ENCODE measurements at regions of chr12 and their contacts with region 1.

Region 1: GRCh38 chr12:67501362-67501761 is 147.2 kb upstream of the DYRK2 start:
- DNase-seq: no peak
- ATAC-seq: peak; percentile 85 to 91
- H3K4me3 ChIP-seq: no peak overlapping the region
- H3K27ac ChIP-seq: peak overlapping the region; percentile 37 to 86 (median 74)
- H3K4me1 ChIP-seq: peaks cover 9 to 15% of the 10 kb centered on the region in 2 donors
- H3K27me3 ChIP-seq: no peaks in the 10 kb centered on the region
- CTCF ChIP-seq: no peak
- POLR2A ChIP-seq: no peak

Region 2: GRCh38 chr12:67477681-67478265 is 23.6 kb before region 1 on chr12:
- in situ Hi-C with region 1: no loop called
- intact Hi-C with region 1: loop called (anchors 2 kb)
- DNase-seq: no peak
- ATAC-seq: no peak
- H3K4me3 ChIP-seq: no peak overlapping the region
- H3K27ac ChIP-seq: no peak overlapping the region
- H3K4me1 ChIP-seq: peaks cover 5 to 6% of the 10 kb centered on the region in 2 donors
- H3K27me3 ChIP-seq: no peaks in the 10 kb centered on the region
- CTCF ChIP-seq: no peak
- POLR2A ChIP-seq: no peak

Measured in gastrocnemius medialis (tissue), 4 donors.